Gastrocnemius medialis (tissue), 4 donors: ENCODE measurements at regions of chr14 and their contacts with region 1.

Region 1: DNA sequence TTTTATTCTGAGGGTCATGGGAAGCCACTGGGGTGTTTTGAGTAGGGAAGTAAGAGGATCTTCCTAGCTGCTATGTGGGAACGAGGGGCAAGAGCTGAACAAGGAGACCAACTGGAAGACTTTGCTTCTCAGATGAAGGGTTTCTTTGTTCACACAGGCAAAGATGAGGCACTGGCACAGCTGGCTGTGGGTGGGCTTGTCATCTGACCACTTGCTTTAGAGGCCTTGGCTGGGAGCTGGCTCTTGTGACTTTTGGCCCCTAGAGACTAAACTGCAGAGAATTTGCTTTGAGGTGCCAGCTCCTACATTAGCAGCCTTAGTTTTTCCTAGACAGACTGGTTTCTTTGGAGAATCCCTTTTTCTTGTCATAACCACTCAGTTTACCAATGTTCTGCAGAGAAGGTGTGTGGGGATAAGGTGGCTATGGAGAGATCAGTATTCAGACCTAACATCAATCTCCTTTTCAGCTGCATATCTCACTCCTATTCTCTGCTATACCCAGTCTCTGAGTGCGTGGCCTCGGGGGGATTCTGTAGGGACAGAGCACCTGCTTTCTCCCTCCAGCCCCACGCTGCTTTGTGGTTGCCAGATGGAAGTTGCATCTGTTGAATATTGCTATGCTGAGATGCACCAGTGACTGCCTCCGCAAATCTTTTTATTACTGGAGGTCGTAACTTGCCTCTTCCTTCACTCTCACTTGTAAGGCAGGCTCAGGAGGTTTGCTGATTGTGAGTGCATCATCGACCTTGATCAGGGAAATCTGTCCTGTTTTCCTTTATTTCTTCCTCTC is 12.7 kb downstream of the PPP2R5C start:
- DNase-seq: no peak
- ATAC-seq: no peak
- H3K4me3 ChIP-seq: no peak overlapping the region
- H3K27ac ChIP-seq: peak overlapping the region in 1 of 4 donors; percentile 16
- H3K4me1 ChIP-seq: peaks cover 18 to 31% of the 10 kb centered on the region in 2 donors
- H3K27me3 ChIP-seq: no peaks in the 10 kb centered on the region
- CTCF ChIP-seq: no peak
- POLR2A ChIP-seq: no peak

Region 2: GRCh38 chr14:101394374-101394773 is 379.8 kb before region 1 on chr14:
- in situ Hi-C with region 1: no loop called
- intact Hi-C with region 1: no loop called
- DNase-seq: no peak
- ATAC-seq: no peak
- H3K4me3 ChIP-seq: no peak overlapping the region
- H3K27ac ChIP-seq: no peak overlapping the region
- H3K4me1 ChIP-seq: no peaks in the 10 kb centered on the region
- H3K27me3 ChIP-seq: no peaks in the 10 kb centered on the region
- CTCF ChIP-seq: no peak
- POLR2A ChIP-seq: no peak

Region 3: DNA sequence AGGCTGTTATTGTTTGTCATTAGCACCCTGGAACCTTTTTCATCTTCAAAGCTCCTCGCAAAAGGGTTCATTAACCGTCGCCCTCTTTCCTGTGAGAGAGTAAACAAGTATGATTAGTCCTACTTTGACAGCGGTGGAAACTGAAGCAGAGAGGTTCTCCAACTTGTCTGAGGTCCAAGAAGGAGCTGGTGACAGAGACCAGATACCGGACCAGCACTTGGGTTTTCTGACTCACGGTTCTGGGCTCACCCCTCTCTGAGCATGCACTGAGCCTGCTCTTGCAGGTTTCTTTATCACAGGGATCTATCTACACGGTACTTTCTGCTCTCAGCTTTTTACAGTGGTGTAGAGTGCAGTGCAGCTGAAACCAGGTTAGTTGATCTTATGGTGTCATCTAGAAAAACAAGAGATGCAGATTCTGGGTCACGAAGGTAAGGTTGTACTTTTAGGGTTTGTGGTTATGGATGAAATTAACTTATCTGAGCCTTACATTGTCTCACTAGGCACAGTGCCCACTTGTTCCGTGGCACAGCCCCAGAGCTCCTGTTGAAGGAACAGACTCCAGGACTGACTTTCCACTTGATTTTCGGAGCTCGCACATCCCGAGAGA is 49.4 kb after region 1 on chr14:
- in situ Hi-C with region 1: loop called in 1 of 4 experiments (anchors 10 kb)
- intact Hi-C with region 1: no loop called
- DNase-seq: peak; percentile 37 to 46
- ATAC-seq: peak; percentile 57 to 86
- H3K4me3 ChIP-seq: peak overlapping the region; percentile 8 to 35 (median 27)
- H3K27ac ChIP-seq: peak overlapping the region; percentile 75 to 88 (median 84)
- H3K4me1 ChIP-seq: peaks cover 52 to 56% of the 10 kb centered on the region in 2 donors
- H3K27me3 ChIP-seq: no peaks in the 10 kb centered on the region
- CTCF ChIP-seq: no peak
- POLR2A ChIP-seq: no peak

Region 4: GRCh38 chr14:101843665-101844064 is 69.5 kb after region 1 on chr14:
- in situ Hi-C with region 1: no loop called
- intact Hi-C with region 1: loop called (anchors 2 kb)
- DNase-seq: no peak
- ATAC-seq: no peak
- H3K4me3 ChIP-seq: no peak overlapping the region
- H3K27ac ChIP-seq: no peak overlapping the region
- H3K4me1 ChIP-seq: peaks cover 0 to 13% of the 10 kb centered on the region in 2 donors
- H3K27me3 ChIP-seq: no peaks in the 10 kb centered on the region
- CTCF ChIP-seq: peak in 2 of 5 experiments; percentile 32 to 35
- POLR2A ChIP-seq: no peak